ENCODE measurements at regions of chr12 and their contacts with region 1.

Region 1: GRCh38 chr12:57693659-57694458 is at the start of gene OS9:
- DNase-seq: peak; percentile 99
- H3K4me3 Mint-ChIP-seq: no peak within 1 kb of the TSS
- H3K27ac Mint-ChIP-seq: no peak within 1 kb of the TSS
- H3K4me1 Mint-ChIP-seq: peaks cover 3% of the 10 kb centered on the region
- H3K27me3 Mint-ChIP-seq: no peaks in the 10 kb centered on the region
- total RNA-seq, gene OS9: 60.7 to 60.9 TPM

Region 2: DNA sequence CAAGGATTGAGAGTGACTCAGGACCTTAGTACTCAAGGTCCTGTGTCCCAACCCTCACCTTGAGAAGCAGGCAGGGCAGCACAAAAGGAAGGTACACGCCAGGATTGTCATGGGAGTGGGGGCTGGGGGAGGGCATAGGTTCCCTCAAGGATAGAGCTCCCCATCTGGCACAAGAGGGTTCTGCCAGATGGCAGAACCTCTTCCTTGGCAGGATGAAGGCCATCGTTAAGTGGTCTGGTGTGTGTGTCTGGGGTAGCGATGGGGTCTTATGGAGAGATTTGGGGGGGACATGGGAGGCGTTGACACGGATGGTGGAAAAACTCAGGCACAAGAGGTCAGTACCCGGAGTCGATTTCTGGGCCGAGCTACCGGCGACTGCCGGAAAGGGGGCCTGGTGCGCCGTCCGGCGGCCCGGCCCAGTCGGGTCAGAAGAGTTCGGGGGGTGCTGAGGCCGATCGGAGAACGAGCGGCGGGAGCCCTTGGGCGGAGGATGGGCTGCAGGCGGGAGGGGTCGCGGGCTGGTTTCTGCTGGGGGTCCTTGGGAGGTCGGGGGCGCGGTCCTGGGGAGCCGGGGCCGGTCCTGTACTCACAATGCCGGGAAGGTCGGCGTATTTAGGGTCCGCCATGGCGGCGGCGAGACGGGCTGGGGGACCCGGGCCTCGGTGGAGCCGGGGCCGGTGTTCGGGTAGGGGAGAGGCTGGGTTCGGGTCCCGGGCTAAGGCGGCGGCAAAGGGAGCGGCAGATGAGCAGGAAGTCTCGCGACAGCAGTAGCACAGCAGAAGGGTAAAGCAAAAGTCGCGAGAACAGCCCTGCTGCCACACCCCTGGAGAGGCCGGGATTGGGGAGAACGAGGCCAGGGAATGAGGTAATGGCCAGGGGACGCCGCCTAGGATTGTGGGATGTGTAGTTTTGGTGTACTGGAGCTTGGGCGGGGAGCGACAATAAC is 147.1 kb before region 1 on chr12 and contains the start of gene DCTN2:
- CTCF ChIA-PET with region 1: no interaction called
- intact Hi-C with region 1: loop called (anchors 1 kb)
- DNase-seq: peak; percentile 98
- H3K4me3 Mint-ChIP-seq: peak within 1 kb of the TSS; percentile 91
- H3K27ac Mint-ChIP-seq: peak within 1 kb of the TSS; percentile 82
- H3K4me1 Mint-ChIP-seq: peaks cover 47% of the 10 kb centered on the region
- H3K27me3 Mint-ChIP-seq: no peaks in the 10 kb centered on the region
- total RNA-seq, gene DCTN2: 65.1 to 71.7 TPM

Region 3: GRCh38 chr12:57666897-57667296 is 27.0 kb before region 1 on chr12:
- CTCF ChIA-PET with region 1: no interaction called
- intact Hi-C with region 1: no loop called
- DNase-seq: no peak
- H3K4me3 Mint-ChIP-seq: no peak overlapping the region
- H3K27ac Mint-ChIP-seq: no peak overlapping the region
- H3K4me1 Mint-ChIP-seq: no peaks in the 10 kb centered on the region
- H3K27me3 Mint-ChIP-seq: peaks cover 2% of the 10 kb centered on the region

Region 4: DNA sequence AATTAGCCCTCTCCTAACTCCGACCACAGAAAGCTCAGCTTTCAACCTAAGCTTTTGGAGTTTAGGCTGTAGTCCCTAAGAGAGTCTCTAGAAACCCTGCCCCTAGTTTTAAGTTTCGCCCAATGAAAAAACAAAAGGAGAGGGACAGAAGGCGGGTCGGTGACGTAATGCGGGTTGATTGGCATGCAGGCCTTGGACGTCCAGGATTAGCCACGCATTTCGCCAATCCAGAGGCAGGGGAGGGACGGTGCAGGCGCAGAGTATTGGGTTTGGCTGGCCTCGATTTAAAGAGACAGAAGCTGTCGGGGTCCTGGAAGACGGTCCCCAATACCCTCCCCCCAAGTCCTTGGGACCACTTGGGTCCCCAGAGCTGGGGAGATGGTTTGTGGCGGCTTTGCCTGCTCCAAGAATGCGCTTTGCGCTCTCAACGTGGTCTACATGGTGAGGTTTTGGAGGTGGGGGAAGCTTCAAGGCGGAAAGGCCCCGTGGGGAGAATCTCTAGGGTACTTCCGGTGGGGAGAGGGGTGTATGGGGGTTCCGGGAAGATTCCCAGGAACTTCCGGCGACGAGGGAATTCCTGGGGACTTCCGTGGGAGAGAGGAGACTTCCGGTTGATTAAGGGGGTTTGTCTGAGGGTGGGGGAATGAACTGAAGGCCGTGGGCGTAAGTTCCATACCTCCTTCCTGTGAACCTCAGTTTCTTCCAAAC is 51.1 kb after region 1 on chr12 and contains the start of gene TSPAN31:
- CTCF ChIA-PET with region 1: interaction called, 6 read pairs
- intact Hi-C with region 1: loop called (anchors 1 kb)
- DNase-seq: peak; percentile 99
- H3K4me3 Mint-ChIP-seq: peak within 1 kb of the TSS; percentile 85
- H3K27ac Mint-ChIP-seq: peak within 1 kb of the TSS; percentile 94
- H3K4me1 Mint-ChIP-seq: peaks cover 40% of the 10 kb centered on the region
- H3K27me3 Mint-ChIP-seq: no peaks in the 10 kb centered on the region
- total RNA-seq, gene TSPAN31: 6.4 to 7.7 TPM

Region 5: GRCh38 chr12:57941165-57941894 is 247.5 kb after region 1 on chr12 and contains the start of gene ATP23:
- CTCF ChIA-PET with region 1: no interaction called
- intact Hi-C with region 1: loop called (anchors 2 kb)
- DNase-seq: peak; percentile 90
- H3K4me3 Mint-ChIP-seq: peak within 1 kb of the TSS; percentile 94
- H3K27ac Mint-ChIP-seq: peak within 1 kb of the TSS; percentile 96
- H3K4me1 Mint-ChIP-seq: peaks cover 38% of the 10 kb centered on the region
- H3K27me3 Mint-ChIP-seq: no peaks in the 10 kb centered on the region
- total RNA-seq, gene ATP23: 11.3 to 11.9 TPM